Aorta (tissue), 5 donors: ENCODE measurements at regions of chr11 and their contacts with region 1.

Region 1: GRCh38 chr11:87352759-87353707 is 315.3 kb downstream of the TMEM135 start:
- DNase-seq: peak; percentile 92 to 98
- ATAC-seq: peak; percentile 96
- H3K4me3 ChIP-seq: no peak overlapping the region
- H3K27ac ChIP-seq: no peak overlapping the region
- H3K4me1 ChIP-seq: peaks cover 0 to 6% of the 10 kb centered on the region in 2 donors
- H3K27me3 ChIP-seq: no peaks in the 10 kb centered on the region

Region 2: DNA sequence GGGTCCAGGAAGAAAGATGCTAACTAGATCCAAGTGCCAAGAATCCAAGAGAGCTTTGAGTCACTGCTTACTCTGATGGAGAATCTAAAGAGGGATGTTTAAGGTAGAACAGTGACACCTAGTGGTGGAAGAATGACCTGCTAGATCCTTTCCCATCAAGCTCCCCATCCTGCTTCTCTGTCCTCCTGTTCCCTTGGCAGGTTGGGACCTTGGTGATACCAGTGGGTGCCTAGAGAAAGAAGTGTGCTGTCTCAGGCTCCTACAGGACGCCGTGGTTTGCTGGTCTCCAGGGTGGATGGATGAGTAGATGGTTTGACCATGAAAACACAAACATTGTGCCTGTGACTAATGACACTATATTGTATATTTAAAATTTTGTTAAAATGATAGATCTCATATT is 68.4 kb after region 1 on chr11:
- intact Hi-C with region 1: loop called (anchors 1 kb)
- DNase-seq: no peak
- ATAC-seq: peak; percentile 86
- H3K4me3 ChIP-seq: no peak overlapping the region
- H3K27ac ChIP-seq: no peak overlapping the region
- H3K4me1 ChIP-seq: peaks cover 4 to 6% of the 10 kb centered on the region in 2 donors
- H3K27me3 ChIP-seq: no peaks in the 10 kb centered on the region

Region 3: DNA sequence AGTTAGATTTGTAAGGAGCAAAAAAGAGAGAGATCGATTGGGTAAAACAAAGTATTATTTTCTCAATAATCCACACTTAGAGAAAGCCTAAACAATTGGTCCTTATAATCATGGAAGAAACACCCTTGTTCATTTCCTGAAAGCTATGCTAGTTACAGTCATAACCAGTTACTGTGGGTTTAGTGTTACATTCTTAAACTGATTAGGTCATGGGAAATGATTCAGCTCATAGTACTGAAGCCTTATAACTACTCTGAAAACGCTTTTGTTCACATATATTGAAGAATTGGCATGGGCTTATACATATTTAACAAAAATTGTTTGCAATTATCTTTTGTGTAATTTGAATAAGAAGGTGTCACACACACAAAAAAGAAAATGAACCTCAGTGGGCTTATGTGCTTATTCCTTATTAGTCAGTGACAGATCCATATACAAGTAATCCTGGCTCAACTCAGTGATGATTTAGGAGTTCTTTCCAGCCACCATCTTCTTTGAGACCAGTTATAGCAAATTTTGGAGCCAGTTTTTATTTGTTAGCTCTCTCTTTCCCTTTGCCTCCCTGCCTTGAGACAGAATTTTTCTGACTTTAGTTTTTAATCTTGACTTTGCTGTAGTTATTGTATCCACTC is 1183.0 kb after region 1 on chr11:
- intact Hi-C with region 1: loop called (anchors 10 kb)
- DNase-seq: no peak
- ATAC-seq: no peak
- H3K4me3 ChIP-seq: no peak overlapping the region
- H3K27ac ChIP-seq: no peak overlapping the region
- H3K4me1 ChIP-seq: no peaks in the 10 kb centered on the region
- H3K27me3 ChIP-seq: no peaks in the 10 kb centered on the region